Mammary epithelial cell (primary cell): ENCODE measurements at regions of chr6 and their contacts with region 1.

Region 1: GRCh38 chr6:143842902-143843676 is at the start of gene LTV1:
- DNase-seq: peak; percentile 92
- H3K4me3 ChIP-seq: peak within 1 kb of the TSS; percentile 68 to 96 (median 74)
- H3K27ac ChIP-seq: peak within 1 kb of the TSS; percentile 94
- H3K4me1 ChIP-seq: peaks cover 6% of the 10 kb centered on the region
- H3K27me3 ChIP-seq: no peaks in the 10 kb centered on the region
- CTCF ChIP-seq: no peak
- total RNA-seq, gene LTV1: 11.8 to 34.2 TPM

Region 2: DNA sequence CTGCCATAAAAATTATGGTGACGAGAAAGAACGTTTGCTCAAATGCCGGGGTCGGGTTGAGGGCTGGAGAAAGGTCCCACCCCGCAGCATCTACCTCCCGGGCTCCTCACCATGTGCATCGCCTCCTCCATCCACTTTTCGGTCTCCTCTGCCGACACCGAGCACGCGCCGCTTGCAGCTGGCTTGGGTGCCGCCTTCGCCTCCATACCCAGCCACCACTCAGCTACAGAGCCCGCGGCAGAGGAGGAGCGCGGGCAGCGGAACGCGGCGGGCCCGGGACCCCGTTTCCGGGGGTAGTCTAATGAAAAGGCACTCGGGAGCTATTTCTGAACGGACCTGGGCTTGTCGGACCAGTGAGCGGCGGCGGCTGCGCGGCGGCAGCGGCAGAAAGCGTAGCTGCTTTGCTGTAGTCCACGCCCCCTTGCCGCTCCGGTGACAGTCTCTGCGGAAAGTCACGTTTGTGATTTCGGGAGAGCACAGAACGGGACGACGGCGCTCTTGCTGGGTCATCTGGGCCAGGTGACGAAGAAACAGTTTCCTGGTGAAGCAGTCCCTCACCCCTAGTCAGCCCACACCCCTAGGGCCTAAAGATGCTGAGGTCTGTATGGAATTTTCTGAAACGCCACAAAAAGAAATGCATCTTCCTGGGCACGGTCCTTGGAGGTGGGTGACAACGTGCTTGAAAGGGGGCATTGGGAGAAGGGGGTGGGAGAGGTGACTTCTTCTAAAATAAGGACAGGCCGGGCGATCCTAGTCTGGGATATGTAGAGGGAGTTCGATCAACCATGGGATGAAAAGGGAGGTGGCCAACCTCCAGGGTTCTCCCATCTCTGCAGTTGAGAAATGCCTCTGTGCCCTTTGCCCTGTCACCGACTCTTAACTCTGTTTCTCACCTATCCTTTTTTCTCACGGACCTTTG is 392.4 kb before region 1 on chr6 and contains the starts of genes ADAT2 and PEX3:
- CTCF ChIA-PET with region 1: no interaction called
- dilution Hi-C with region 1: no loop called
- in situ Hi-C with region 1: no loop called
- intact Hi-C with region 1: loop called (anchors 5 kb)
- DNase-seq: peak; percentile 94
- H3K4me3 ChIP-seq: peak within 1 kb of the TSS; percentile 63 to 93 (median 82)
- H3K27ac ChIP-seq: peak within 1 kb of the TSS; percentile 85
- H3K4me1 ChIP-seq: no peaks in the 10 kb centered on the region
- H3K27me3 ChIP-seq: no peaks in the 10 kb centered on the region
- CTCF ChIP-seq: no peak
- total RNA-seq, gene ADAT2: 5.7 to 17.6 TPM
- total RNA-seq, gene PEX3: 24.7 to 38.0 TPM

Region 3: GRCh38 chr6:143592335-143592734 is 250.8 kb before region 1 on chr6:
- CTCF ChIA-PET with region 1: no interaction called
- dilution Hi-C with region 1: no loop called
- in situ Hi-C with region 1: no loop called
- intact Hi-C with region 1: loop called (anchors 5 kb)
- DNase-seq: no peak
- H3K4me3 ChIP-seq: no peak overlapping the region
- H3K27ac ChIP-seq: no peak overlapping the region
- H3K4me1 ChIP-seq: no peaks in the 10 kb centered on the region
- H3K27me3 ChIP-seq: no peaks in the 10 kb centered on the region
- CTCF ChIP-seq: peak; percentile 41

Region 4: DNA sequence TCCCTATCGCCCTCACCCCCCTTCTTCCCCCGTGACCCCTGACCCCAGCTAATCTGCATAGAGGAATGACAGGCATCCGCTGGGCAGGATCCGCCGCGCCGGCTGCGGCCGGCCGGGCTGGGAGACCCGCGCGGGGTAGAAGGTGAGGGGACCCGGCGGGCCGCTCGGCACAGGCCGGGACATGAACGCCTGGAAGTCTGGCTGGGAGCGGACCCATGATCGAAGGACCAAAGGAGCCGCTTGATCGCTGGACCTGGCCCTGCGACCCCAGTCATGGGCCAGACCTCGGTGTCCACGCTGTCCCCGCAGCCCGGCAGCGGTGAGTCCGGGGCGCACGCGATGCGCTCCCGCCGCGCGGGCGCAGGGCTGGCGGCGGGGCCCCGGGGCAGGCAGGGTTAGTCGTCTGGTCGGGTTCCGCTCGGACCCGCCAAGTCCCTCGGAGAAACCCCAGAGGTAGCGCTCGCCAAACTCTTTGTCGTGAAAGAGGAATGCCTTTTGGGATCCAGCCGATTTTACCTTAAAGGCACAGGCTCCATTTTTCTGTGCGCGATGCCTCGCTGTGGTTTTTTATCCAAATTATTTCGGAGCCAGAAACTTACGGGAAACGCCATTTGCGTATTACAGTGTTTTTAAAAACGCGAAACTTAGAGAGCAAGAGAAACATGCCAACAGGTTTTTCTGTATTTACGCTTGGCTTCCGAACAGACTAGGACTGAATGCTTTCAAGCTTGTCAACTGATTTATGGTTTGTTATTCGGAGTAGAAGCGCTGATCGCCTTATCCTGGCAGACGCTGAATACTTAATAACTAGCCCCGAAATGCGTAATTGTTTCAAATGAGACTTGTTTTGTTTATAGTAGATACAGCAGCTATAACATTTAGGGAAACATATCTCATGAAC is 164.9 kb before region 1 on chr6 and contains the start of gene PHACTR2:
- CTCF ChIA-PET with region 1: no interaction called
- dilution Hi-C with region 1: no loop called
- in situ Hi-C with region 1: no loop called
- intact Hi-C with region 1: loop called (anchors 2 kb)
- DNase-seq: peak; percentile 58
- H3K4me3 ChIP-seq: peak within 1 kb of the TSS; percentile 62 to 82 (median 78)
- H3K27ac ChIP-seq: peak within 1 kb of the TSS; percentile 72
- H3K4me1 ChIP-seq: peaks cover 34% of the 10 kb centered on the region
- H3K27me3 ChIP-seq: no peaks in the 10 kb centered on the region
- CTCF ChIP-seq: no peak
- total RNA-seq, gene PHACTR2: 24.3 to 32.1 TPM

Region 5: GRCh38 chr6:143822584-143823024 is 20.5 kb before region 1 on chr6:
- CTCF ChIA-PET with region 1: no interaction called
- dilution Hi-C with region 1: no loop called
- in situ Hi-C with region 1: no loop called
- intact Hi-C with region 1: no loop called
- DNase-seq: no peak
- H3K4me3 ChIP-seq: no peak overlapping the region
- H3K27ac ChIP-seq: no peak overlapping the region
- H3K4me1 ChIP-seq: peaks cover 15% of the 10 kb centered on the region
- H3K27me3 ChIP-seq: no peaks in the 10 kb centered on the region
- CTCF ChIP-seq: no peak

Region 6: GRCh38 chr6:143993965-143994646 is 151.0 kb after region 1 on chr6:
- CTCF ChIA-PET with region 1: no interaction called
- dilution Hi-C with region 1: no loop called
- in situ Hi-C with region 1: no loop called
- intact Hi-C with region 1: no loop called
- DNase-seq: no peak
- H3K4me3 ChIP-seq: no peak overlapping the region
- H3K27ac ChIP-seq: no peak overlapping the region
- H3K4me1 ChIP-seq: no peaks in the 10 kb centered on the region
- H3K27me3 ChIP-seq: peaks cover 4% of the 10 kb centered on the region
- CTCF ChIP-seq: no peak

Region 7: GRCh38 chr6:144013486-144013909 is 170.4 kb after region 1 on chr6:
- CTCF ChIA-PET with region 1: no interaction called
- dilution Hi-C with region 1: no loop called
- in situ Hi-C with region 1: no loop called
- intact Hi-C with region 1: loop called (anchors 10 kb)
- DNase-seq: peak; percentile 56
- H3K4me3 ChIP-seq: no peak overlapping the region
- H3K27ac ChIP-seq: no peak overlapping the region
- H3K4me1 ChIP-seq: no peaks in the 10 kb centered on the region
- H3K27me3 ChIP-seq: peaks cover 2% of the 10 kb centered on the region
- CTCF ChIP-seq: peak; percentile 88 to 89

Region 8: GRCh38 chr6:144095331-144096002 is 252.4 kb after region 1 on chr6 and contains the start of gene SF3B5:
- CTCF ChIA-PET with region 1: no interaction called
- dilution Hi-C with region 1: no loop called
- in situ Hi-C with region 1: no loop called
- intact Hi-C with region 1: loop called (anchors 1 kb)
- DNase-seq: peak; percentile 100
- H3K4me3 ChIP-seq: peak within 1 kb of the TSS; percentile 58 to 91 (median 61)
- H3K27ac ChIP-seq: peak within 1 kb of the TSS; percentile 77
- H3K4me1 ChIP-seq: peaks cover 6% of the 10 kb centered on the region
- H3K27me3 ChIP-seq: no peaks in the 10 kb centered on the region
- CTCF ChIP-seq: no peak
- total RNA-seq, gene SF3B5: 81.9 to 132 TPM